ENCODE measurements at regions of chr12 and their contacts with region 1.

Region 1: GRCh38 chr12:55738123-55739024 is 4.5 kb upstream of the GDF11 start:
- DNase-seq: peak; percentile 83
- CTCF ChIP-seq: peak; percentile 77

Region 2: DNA sequence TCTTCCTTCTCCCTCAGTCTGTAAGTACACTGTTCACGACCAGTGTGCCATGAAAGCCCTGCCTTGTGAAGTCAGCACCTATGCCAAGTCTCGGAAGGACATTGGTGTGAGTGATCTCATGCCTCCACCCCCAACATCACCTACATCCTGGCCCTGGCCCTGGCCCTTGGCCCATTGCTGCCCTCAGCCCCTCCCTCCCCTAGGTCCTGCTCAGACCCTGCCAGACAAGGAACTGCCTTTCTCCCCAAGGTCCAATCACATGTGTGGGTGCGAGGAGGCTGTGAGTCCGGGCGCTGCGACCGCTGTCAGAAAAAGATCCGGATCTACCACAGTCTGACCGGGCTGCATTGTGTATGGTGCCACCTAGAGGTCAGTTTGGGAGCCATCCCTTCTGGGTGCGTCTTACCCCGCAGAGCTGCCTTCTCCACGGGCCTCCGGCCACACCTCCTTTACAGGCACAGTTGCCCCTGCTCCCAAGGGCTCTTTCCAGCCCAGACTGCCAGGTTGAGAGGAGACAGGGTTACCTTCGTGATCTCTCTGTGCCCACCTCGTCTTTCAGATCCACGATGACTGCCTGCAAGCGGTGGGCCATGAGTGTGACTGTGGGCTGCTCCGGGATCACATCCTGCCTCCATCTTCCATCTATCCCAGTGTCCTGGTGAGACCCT is 201.8 kb after region 1 on chr12:
- in situ Hi-C with region 1: loop called (anchors 10 kb)
- DNase-seq: peak; percentile 84
- CTCF ChIP-seq: peak; percentile 88

Region 3: DNA sequence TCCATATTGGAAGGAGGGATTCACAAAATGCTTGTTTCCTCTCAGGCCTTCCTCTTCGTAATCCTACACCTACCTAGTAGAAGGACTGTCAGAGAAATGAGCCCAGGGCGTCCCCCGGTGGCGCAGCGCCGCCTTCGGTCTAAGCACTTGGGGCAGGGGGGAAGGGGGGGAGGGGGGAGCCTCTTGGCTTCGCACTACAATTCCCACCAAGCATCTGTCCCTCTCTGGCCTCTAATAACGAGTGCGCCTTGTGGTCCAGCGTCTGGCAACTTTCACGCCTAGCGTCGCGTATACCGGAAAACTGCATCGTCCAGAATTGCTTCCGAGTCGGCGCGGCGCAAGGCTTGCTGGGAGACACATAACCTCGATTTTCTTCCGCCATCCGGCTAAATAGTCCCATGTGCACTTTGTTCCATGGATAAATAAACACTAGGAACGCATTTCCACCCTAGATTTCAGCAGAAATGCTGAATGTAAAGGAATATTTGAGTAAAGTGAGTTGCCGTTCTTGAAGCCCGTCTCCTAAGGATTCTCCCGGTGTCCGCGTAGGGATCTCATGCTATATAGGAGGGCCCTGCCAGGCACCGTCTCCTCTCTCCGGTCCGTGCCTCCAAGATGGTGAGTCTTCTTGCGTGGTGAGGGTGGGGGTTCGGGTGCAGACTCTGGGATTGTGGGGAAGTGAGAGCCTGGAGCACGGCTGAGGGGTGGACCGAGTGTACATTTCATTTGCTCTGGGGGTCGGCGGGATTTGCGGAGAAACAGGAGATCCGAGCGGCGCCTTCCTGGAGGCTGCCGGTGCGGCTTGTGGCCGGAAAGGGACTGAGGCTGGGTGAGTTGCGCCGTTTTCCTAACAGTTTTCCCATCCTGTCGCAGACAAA is 303.4 kb after region 1 on chr12 and contains the start of gene RPS26:
- in situ Hi-C with region 1: loop called (anchors 25 kb)
- DNase-seq: peak; percentile 86
- CTCF ChIP-seq: peak; percentile 78